ENCODE measurements at regions of chr3 and their contacts with region 1.

Region 1: GRCh38 chr3:42134877-42135464 is 43.8 kb downstream of the TRAK1 start:
- DNase-seq: no peak
- ATAC-seq: no peak
- H3K4me3 ChIP-seq: no peak overlapping the region
- H3K27ac ChIP-seq: no peak overlapping the region
- H3K4me1 ChIP-seq: peaks cover 27% of the 10 kb centered on the region
- H3K27me3 ChIP-seq: no peaks in the 10 kb centered on the region
- CTCF ChIP-seq: no peak

Region 2: DNA sequence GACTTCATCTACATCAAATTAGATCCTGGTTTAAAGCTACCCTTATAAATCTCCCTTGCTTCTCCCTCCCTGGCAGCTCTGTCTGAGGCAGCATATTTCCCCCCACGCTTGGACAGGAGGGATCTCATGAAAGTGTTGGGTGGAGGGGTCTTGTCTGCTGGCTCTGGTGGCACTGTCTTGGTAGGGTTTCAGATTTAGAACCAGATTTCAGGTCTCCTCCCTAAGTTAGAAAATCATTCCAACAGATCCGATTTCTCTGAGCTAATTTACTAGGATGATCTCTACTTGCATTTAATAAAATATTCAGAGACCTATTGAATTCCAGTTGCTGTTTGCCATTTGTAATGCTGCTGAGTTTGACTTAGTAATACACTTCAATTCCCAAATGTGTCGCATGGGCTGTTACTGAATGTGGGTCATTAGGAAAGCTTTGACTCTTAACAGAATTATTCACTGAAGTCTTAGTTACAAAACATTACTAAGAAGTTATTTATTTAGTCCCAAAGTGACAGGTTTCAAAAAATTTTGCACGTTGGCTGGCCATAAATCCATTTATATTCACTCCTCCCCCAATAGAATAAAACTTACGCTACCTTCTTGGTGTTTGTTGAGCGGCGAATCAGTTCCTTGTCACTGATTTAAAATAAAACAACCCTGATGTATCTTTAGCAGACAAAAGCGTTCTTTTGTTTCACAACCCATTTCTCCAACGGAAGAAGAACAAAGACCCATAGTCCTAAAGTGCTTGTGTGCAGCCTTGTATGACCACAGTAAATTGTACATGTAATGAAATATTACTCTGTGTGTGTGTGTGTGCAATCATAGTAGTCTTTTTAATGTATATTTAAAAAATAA is 40.6 kb after region 1 on chr3:
- CTCF ChIA-PET with region 1: no interaction called
- POLR2A ChIA-PET with region 1: interaction called, 19 read pairs
- intact Hi-C with region 1: no loop called
- DNase-seq: no peak
- ATAC-seq: no peak
- H3K4me3 ChIP-seq: no peak overlapping the region
- H3K27ac ChIP-seq: peak overlapping the region; percentile 29; the same call in 1 of the 2 replicates
- H3K4me1 ChIP-seq: peaks cover 36% of the 10 kb centered on the region
- H3K27me3 ChIP-seq: no peaks in the 10 kb centered on the region
- CTCF ChIP-seq: no peak

Measured in PC-3 (cell line).